MCF 10A (cell line): ENCODE measurements at regions of chr5 and their contacts with region 1.

Region 1: GRCh38 chr5:59188419-59189225 is 605.7 kb downstream of the RAB3C start:
- DNase-seq: peak; percentile 74
- H3K4me3 Mint-ChIP-seq: no peak overlapping the region
- H3K27ac Mint-ChIP-seq: no peak overlapping the region
- H3K4me1 Mint-ChIP-seq: peaks cover 18% of the 10 kb centered on the region
- H3K27me3 Mint-ChIP-seq: no peaks in the 10 kb centered on the region
- CTCF ChIP-seq: peak; percentile 57

Region 2: DNA sequence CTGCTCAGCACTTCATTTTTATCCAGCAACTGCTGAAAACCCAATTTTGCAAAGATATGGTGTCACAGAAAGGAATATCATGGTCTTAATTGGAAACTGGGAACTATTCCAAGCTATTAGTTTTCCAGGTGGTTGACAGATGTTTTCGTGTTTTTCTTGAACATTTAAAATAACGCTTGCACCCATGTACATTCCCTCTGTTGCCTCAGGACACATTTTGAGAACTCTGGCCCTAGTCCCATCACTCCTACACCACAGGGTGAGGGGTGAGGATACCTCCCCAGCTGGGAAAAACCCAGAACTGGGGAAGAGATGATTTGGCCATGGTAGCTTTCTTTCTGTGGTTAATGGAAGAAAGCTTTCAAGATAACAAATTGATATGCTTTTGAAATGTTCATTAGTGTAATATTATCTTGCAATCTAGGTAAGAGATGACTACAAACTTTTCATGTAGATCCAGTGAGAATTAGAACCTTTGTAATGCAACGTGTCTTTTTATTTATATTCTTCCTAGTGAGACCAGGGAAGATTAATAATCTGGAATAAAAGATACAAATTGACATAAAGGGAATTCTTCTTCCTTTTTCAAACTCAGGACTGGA is 21.2 kb after region 1 on chr5:
- CTCF ChIA-PET with region 1: interaction called, 19 read pairs
- POLR2A ChIA-PET with region 1: interaction called, 4 read pairs
- intact Hi-C with region 1: no loop called
- DNase-seq: peak; percentile 70
- H3K4me3 Mint-ChIP-seq: no peak overlapping the region
- H3K27ac Mint-ChIP-seq: peak overlapping the region; percentile 82
- H3K4me1 Mint-ChIP-seq: peaks cover 39% of the 10 kb centered on the region
- H3K27me3 Mint-ChIP-seq: no peaks in the 10 kb centered on the region
- CTCF ChIP-seq: no peak

Region 3: DNA sequence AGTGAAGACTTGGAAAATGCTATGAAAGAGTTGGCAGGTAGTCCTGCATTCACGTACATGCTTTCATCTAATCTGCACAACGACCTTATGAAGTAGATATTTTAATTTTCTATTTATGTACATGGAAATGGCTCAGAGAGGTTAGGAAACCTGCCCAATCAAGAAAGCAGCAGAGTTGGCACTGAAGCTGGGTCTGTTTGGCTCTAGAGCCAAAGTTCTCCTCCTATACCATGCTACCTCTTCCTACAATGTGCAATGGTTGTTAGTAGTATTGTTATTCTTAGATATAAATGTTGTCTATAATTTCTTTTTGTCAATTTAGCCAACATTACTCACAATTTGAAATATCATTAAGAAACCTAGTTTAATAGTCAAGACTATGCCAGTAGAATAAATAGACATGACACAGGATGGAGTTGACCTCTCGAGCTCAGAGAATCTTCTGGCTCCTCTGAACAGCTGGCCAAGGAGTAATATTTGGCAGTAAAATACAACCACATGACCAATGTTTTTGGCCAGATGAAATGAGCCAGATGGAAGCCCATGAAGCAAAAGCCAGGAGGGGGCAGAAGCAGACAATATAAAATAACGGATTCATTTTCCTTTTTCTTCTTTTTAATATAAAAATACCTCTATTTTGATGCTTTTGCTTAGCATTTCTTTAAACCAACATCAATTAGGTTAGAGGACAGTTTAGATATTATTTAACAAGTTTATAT is 162.6 kb after region 1 on chr5:
- CTCF ChIA-PET with region 1: interaction called, 24 read pairs
- POLR2A ChIA-PET with region 1: interaction called, 3 read pairs
- intact Hi-C with region 1: no loop called
- DNase-seq: peak; percentile 4
- H3K4me3 Mint-ChIP-seq: no peak overlapping the region
- H3K27ac Mint-ChIP-seq: no peak overlapping the region
- H3K4me1 Mint-ChIP-seq: no peaks in the 10 kb centered on the region
- H3K27me3 Mint-ChIP-seq: no peaks in the 10 kb centered on the region
- CTCF ChIP-seq: no peak

Region 4: DNA sequence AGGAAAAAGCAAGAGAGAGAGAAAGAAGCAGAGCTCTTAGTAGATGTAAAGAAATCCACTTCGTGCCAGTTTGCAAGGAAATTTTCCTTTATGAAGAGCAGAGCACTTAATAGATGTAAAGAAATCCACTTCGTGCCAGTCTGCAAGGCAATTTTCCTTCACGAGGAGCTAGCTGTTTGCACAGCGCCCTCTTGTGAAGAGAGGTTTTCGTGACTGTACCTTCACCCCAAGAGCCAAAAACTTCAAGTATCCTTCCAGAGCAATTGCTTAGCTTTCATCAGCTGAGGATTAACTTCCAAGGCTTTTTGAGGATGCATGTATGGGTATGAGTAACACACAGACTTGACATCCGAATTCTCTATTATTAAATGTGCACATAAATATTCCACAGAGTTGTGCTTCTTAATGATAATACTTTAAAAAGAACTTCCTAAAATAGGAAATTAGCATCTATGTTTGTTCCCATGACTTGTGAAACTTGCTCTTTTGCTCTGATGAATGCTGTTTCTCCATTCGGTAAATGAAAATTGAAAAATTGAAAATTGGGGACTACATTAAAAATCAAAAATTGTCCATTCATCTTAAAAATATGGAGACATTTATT is 179.3 kb after region 1 on chr5:
- CTCF ChIA-PET with region 1: interaction called, 359 read pairs
- POLR2A ChIA-PET with region 1: interaction called, 5 read pairs
- intact Hi-C with region 1: loop called (anchors 1 kb)
- DNase-seq: peak; percentile 77
- H3K4me3 Mint-ChIP-seq: no peak overlapping the region
- H3K27ac Mint-ChIP-seq: no peak overlapping the region
- H3K4me1 Mint-ChIP-seq: no peaks in the 10 kb centered on the region
- H3K27me3 Mint-ChIP-seq: no peaks in the 10 kb centered on the region
- CTCF ChIP-seq: peak; percentile 87

Region 5: GRCh38 chr5:59460368-59461153 is 271.9 kb after region 1 on chr5:
- CTCF ChIA-PET with region 1: no interaction called
- POLR2A ChIA-PET with region 1: no interaction called
- intact Hi-C with region 1: no loop called
- DNase-seq: peak; percentile 13
- H3K4me3 Mint-ChIP-seq: no peak overlapping the region
- H3K27ac Mint-ChIP-seq: no peak overlapping the region
- H3K4me1 Mint-ChIP-seq: peaks cover 11% of the 10 kb centered on the region
- H3K27me3 Mint-ChIP-seq: no peaks in the 10 kb centered on the region
- CTCF ChIP-seq: no peak

Region 6: DNA sequence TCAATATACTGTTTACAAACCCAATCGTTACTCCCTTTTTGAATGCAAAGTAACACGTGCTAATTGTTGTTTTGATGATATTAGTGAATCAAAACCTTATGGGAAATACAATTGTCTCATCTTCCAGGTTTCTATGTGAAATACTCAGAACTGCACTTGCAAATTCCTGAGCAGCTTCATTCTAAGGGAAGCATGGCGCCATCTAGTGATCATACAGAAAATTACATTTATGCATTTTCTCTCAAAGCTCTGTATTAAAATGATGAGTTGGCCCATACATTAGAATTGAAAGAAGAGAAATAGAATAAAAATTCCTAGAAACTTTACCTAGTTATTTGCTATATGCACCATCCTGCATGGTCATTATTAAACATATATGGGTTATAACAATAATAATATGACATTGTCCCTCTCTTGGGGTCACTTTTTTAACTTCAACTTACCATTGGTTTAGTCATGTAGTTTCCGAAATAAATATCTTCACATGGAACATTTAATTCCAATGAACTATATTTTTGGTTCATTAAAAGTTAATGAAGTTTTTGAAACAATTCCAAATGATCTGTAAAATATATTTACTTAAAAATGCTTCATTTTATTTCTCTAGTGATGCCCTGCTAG is 484.9 kb after region 1 on chr5:
- CTCF ChIA-PET with region 1: interaction called, 4 read pairs
- POLR2A ChIA-PET with region 1: no interaction called
- intact Hi-C with region 1: loop called (anchors 5 kb)
- DNase-seq: peak; percentile 59
- H3K4me3 Mint-ChIP-seq: no peak overlapping the region
- H3K27ac Mint-ChIP-seq: no peak overlapping the region
- H3K4me1 Mint-ChIP-seq: peaks cover 6% of the 10 kb centered on the region
- H3K27me3 Mint-ChIP-seq: no peaks in the 10 kb centered on the region
- CTCF ChIP-seq: peak; percentile 65